ENCODE measurements at regions of chr2 and their contacts with region 1.

Region 1: DNA sequence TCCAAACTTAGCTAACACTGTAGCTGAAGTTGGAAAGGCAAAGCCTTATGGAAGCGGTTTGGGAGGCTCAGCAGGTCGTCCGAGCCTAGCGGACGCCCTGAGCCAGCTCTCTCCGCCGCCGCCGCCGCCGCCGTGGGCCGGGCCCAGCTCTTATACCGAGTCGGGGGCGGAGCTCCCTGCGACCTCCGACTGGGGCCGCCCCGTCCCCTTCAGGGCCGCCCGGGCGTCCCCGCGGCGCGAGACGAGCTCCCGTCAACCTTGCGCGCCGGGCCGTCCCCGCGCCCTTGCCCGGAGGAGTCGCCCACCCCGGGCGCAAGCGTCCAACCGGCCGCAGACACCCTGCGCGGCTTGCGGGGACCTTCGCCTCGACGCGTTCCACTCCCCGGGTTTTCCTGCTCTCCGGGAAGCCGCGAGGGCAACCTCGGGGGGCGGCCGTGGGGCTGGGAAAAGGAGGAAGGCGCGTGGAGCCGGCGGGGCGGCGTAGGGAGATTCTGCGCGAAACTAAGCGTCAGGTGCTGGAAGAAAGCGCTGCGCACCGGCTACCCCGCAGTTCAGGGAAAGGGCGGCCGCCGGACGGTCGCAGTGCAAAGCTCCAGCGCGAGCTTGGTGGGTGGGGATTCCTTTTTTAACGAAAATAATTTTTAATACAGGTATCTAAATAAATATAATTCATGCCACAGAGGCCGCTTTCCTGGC is at the start of gene SLC40A1:
- DNase-seq: peak; percentile 75
- H3K4me3 Mint-ChIP-seq: peak within 1 kb of the TSS; percentile 83
- H3K27ac Mint-ChIP-seq: peak within 1 kb of the TSS; percentile 77
- H3K4me1 Mint-ChIP-seq: peaks cover 42% of the 10 kb centered on the region
- H3K27me3 Mint-ChIP-seq: peaks cover 4% of the 10 kb centered on the region
- total RNA-seq, gene SLC40A1: 4.7 to 4.8 TPM

Region 2: DNA sequence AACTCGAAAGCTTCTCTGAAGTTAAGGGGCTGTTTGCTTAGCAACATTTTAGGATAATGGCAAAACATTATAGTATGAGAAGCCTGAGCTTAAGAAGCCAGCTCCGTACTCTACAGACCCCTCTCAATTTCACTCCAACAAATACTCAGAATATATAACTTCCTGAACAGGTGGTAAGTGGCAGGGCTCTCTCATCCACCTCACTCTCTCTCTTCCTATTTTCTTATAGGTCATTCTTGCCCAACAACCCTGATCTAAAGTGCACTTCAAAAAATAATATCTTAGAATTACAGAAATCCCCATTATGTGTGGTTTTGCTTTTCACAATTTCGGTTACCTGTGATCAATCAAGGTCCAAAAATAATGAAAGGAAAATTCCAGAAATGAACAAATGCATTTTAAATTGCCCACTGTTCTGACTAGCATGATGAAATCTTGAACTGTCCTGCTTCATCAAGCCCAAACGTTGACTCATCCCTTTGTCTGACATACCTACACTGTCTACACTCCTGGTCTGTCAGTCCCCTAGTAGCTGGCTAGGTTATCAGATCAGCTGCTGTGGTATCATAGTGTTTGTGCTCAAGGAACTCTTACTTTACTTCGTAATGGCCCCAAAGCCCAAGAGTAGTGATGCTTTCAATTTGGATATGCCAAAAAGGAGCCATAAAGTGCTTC is 278.4 kb before region 1 on chr2:
- CTCF ChIA-PET with region 1: no interaction called
- POLR2A ChIA-PET with region 1: no interaction called
- intact Hi-C with region 1: loop called (anchors 10 kb)
- DNase-seq: no peak
- H3K4me3 Mint-ChIP-seq: peak overlapping the region; percentile 0
- H3K27ac Mint-ChIP-seq: peak overlapping the region; percentile 83
- H3K4me1 Mint-ChIP-seq: peaks cover 72% of the 10 kb centered on the region
- H3K27me3 Mint-ChIP-seq: no peaks in the 10 kb centered on the region

Region 3: DNA sequence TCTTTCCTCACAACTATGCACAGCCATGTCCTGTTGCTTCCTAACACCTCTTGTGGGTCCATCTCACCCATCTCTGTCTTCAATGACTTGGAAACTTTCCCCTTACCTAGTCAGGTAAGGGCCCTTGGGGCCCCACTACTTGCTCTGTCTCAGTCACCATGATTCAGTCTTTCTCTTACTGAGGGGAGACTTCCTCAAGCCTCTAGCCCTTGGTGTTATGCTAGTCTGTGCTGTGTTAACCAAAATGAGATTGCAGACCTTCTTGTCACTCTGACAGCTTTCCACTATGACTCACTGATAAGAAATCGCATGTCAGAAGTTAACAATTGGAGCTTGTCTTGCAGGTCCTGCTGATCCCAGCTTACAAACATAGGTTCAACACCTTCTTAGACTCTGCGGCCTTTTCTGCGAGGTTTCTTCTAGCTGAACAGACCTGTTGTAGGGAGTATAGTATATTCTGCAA is 74.3 kb before region 1 on chr2:
- CTCF ChIA-PET with region 1: interaction called, 3 read pairs
- POLR2A ChIA-PET with region 1: no interaction called
- intact Hi-C with region 1: loop called (anchors 2 kb)
- DNase-seq: peak; percentile 39
- H3K4me3 Mint-ChIP-seq: no peak overlapping the region
- H3K27ac Mint-ChIP-seq: peak overlapping the region; percentile 6
- H3K4me1 Mint-ChIP-seq: peaks cover 15% of the 10 kb centered on the region
- H3K27me3 Mint-ChIP-seq: no peaks in the 10 kb centered on the region

Region 4: DNA sequence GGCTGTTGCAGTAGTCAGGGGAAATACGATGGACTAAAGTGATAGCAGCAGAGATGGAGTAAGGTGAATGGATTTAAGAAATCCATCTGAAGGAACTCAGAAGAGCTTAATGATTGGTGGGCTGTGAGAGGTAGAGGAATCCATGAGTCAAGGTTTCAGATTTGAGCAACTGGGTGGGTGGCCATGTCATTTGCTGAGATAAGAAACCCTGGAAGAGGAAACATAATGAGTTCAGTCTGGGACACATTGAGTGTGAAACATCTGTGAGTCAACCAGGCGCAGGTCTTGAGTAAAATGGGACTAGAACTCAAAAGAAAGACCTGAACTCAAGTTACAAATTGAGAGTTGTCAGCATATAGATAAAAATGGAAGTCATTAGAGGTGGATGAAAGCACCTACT is 60.8 kb after region 1 on chr2:
- CTCF ChIA-PET with region 1: no interaction called
- POLR2A ChIA-PET with region 1: no interaction called
- intact Hi-C with region 1: loop called (anchors 5 kb)
- DNase-seq: peak; percentile 74
- H3K4me3 Mint-ChIP-seq: no peak overlapping the region
- H3K27ac Mint-ChIP-seq: peak overlapping the region; percentile 36
- H3K4me1 Mint-ChIP-seq: peaks cover 27% of the 10 kb centered on the region
- H3K27me3 Mint-ChIP-seq: no peaks in the 10 kb centered on the region

Region 5: GRCh38 chr2:189762551-189763298 is 181.9 kb after region 1 on chr2 and contains the start of gene OSGEPL1:
- CTCF ChIA-PET with region 1: no interaction called
- POLR2A ChIA-PET with region 1: no interaction called
- intact Hi-C with region 1: loop called (anchors 1 kb)
- DNase-seq: peak; percentile 95
- H3K4me3 Mint-ChIP-seq: peak within 1 kb of the TSS; percentile 91
- H3K27ac Mint-ChIP-seq: peak within 1 kb of the TSS; percentile 96
- H3K4me1 Mint-ChIP-seq: peaks cover 9% of the 10 kb centered on the region
- H3K27me3 Mint-ChIP-seq: no peaks in the 10 kb centered on the region
- total RNA-seq, gene OSGEPL1: 11.1 to 11.7 TPM

Region 6: GRCh38 chr2:190079160-190079559 is 498.4 kb after region 1 on chr2:
- CTCF ChIA-PET with region 1: no interaction called
- POLR2A ChIA-PET with region 1: no interaction called
- intact Hi-C with region 1: no loop called
- DNase-seq: no peak
- H3K4me3 Mint-ChIP-seq: no peak overlapping the region
- H3K27ac Mint-ChIP-seq: no peak overlapping the region
- H3K4me1 Mint-ChIP-seq: no peaks in the 10 kb centered on the region
- H3K27me3 Mint-ChIP-seq: peaks cover 6% of the 10 kb centered on the region

Region 7: GRCh38 chr2:190235101-190235500 is 654.3 kb after region 1 on chr2:
- CTCF ChIA-PET with region 1: no interaction called
- POLR2A ChIA-PET with region 1: no interaction called
- intact Hi-C with region 1: no loop called
- DNase-seq: no peak
- H3K4me3 Mint-ChIP-seq: no peak overlapping the region
- H3K27ac Mint-ChIP-seq: no peak overlapping the region
- H3K4me1 Mint-ChIP-seq: no peaks in the 10 kb centered on the region
- H3K27me3 Mint-ChIP-seq: no peaks in the 10 kb centered on the region